HepG2 (cell line): ENCODE measurements at regions of chr10 and their contacts with region 1.

Region 1: DNA sequence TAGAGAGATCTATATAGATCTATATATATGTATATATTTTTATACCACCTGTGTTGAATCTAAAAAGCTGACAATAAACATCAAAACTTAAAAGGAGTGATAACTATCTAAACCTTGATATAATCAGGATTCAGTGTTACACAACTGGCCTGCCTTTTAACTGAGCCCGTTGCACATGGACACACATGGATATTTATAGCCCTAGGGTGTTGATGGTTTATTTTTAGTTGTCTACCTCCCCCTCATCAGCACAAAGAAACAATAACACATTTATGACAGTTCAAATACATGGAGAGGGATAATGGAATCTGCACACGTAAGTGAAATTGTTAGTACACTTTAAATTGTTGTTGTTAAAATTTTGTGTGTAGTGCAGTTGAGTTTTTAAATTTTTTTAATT is 336.9 kb downstream of the ZNF248 start:
- DNase-seq: no peak
- ATAC-seq: no peak
- H3K4me3 ChIP-seq: no peak overlapping the region
- H3K27ac ChIP-seq: no peak overlapping the region
- H3K4me1 ChIP-seq: no peaks in the 10 kb centered on the region
- H3K27me3 ChIP-seq: no peaks in the 10 kb centered on the region
- CTCF ChIP-seq: no peak
- EP300 ChIP-seq: no peak
- POLR2A ChIP-seq: no peak
- RAD21 ChIP-seq: no peak

Region 2: DNA sequence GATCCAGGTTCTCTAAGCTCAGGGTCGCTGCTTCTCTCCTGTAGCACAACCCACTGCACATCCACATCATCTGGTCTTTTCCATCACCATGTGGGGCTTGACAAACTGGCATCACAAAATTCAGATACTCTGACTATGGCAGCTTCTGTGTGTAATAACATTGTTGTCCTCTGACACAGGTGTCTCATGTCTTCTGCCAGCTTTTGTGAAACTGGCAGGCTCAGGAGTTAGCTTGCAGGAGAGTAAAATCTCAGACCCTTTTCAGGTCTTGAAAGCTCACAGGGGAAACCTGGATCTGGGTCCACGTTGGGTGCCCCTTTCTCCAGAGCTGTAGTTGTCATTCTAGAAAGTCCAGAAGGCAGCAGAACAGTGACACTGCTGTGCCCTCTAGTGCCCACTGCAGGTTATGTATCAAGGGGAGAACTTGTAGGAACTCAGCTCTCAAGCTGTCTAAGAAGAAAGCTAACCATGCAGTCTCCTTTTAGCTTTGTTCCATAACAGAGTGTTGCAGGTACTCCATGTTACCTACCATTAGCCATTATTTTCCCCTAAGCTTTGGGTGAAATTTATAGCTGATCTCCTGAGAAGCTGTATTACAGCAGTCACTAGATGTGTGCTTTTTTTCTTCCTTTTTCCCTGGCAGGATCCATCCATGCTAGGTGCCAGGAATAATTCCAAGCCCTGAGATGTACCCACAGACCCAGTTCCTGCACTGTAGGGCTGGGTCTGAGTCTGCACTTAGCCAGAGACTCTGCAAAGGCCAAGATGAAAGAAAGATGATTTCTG is 234.2 kb after region 1 on chr10:
- CTCF ChIA-PET with region 1: interaction called, 8 read pairs
- POLR2A ChIA-PET with region 1: no interaction called
- in situ Hi-C with region 1: loop called (anchors 10 kb)
- intact Hi-C with region 1: no loop called
- DNase-seq: peak; percentile 64
- ATAC-seq: peak; percentile 97
- H3K4me3 ChIP-seq: no peak overlapping the region
- H3K27ac ChIP-seq: no peak overlapping the region
- H3K4me1 ChIP-seq: peaks cover 11% of the 10 kb centered on the region
- H3K27me3 ChIP-seq: no peaks in the 10 kb centered on the region
- CTCF ChIP-seq: peak; percentile 87
- EP300 ChIP-seq: no peak
- POLR2A ChIP-seq: no peak
- RAD21 ChIP-seq: peak; percentile 71